ENCODE measurements at regions of chr10 and their contacts with region 1.

Region 1: GRCh38 chr10:75029857-75030256 is 81.6 kb upstream of the SAMD8 start:
- DNase-seq: no peak
- ATAC-seq: no peak
- H3K4me3 Mint-ChIP-seq: no peak overlapping the region
- H3K27ac Mint-ChIP-seq: no peak overlapping the region
- H3K4me1 Mint-ChIP-seq: peaks cover 21% of the 10 kb centered on the region
- H3K27me3 Mint-ChIP-seq: no peaks in the 10 kb centered on the region

Region 2: DNA sequence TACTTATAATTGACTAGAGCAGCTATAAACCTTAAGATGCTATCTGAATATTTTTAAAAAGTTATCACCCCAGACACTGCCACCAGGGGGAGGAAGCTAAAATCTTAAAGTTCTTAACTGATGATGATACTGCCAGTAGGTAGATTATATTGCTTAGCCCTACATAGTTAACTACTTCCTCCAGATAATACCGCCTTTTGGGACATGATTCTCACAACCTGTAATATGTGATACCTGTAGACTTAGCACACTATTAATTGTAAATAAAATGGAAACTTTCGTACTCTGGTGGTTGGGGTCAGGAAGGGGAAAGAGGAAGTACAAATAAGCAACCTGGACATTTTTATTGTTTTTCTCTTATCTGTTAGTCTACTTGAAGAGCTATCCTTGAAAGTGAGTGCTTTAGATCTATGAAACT is 609.9 kb before region 1 on chr10:
- CTCF ChIA-PET with region 1: no interaction called
- POLR2A ChIA-PET with region 1: no interaction called
- intact Hi-C with region 1: loop called in 1 of 2 experiments (anchors 10 kb)
- DNase-seq: peak; percentile 48
- ATAC-seq: peak; percentile 53
- H3K4me3 Mint-ChIP-seq: no peak overlapping the region
- H3K27ac Mint-ChIP-seq: no peak overlapping the region
- H3K4me1 Mint-ChIP-seq: peaks cover 4% of the 10 kb centered on the region
- H3K27me3 Mint-ChIP-seq: no peaks in the 10 kb centered on the region

Region 3: DNA sequence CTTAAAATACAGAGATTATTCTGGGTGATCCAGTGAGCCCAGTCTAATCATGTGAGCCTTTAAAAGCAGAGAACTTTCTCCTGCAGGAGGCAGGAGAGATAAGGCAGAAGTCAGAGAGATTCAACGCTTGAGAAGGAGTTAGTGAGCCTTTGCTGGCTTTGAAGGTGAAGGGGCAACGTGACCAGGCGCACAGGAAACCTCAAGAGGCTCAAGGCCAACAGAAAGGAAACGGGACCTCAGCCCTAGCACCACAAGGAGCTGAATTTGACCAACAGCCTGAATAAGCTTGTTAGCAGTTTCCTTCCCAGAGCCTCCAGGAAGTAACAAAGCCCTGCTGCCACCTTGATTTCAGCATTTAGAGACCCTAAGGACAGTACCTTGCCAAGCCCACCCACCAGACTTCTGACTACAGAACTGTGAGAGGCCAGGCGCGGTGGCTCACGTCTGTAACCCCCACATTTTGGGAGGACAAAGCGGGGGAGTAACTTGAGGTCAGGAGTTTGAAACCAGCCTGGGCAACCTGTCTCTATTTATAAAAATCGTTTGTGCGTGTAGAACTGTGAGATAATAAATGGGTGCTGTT is 290.8 kb before region 1 on chr10:
- CTCF ChIA-PET with region 1: interaction called, 6 read pairs
- POLR2A ChIA-PET with region 1: no interaction called
- intact Hi-C with region 1: loop called in 1 of 2 experiments (anchors 10 kb)
- DNase-seq: peak; percentile 32
- ATAC-seq: peak; percentile 65
- H3K4me3 Mint-ChIP-seq: no peak overlapping the region
- H3K27ac Mint-ChIP-seq: peak overlapping the region; percentile 76
- H3K4me1 Mint-ChIP-seq: peaks cover 15% of the 10 kb centered on the region
- H3K27me3 Mint-ChIP-seq: no peaks in the 10 kb centered on the region